CD4-positive, alpha-beta T cell (primary cell): ENCODE measurements at regions of chr1 and their contacts with region 1.

Region 1: GRCh38 chr1:26733982-26734381 is 38.2 kb downstream of the ARID1A start:
- DNase-seq: peak in 4 of 14 experiments; percentile 25 to 59 (median 50)
- ATAC-seq: peak; percentile 52
- H3K4me3 ChIP-seq: no peak overlapping the region
- H3K4me3 Mint-ChIP-seq: no peak overlapping the region
- H3K27ac ChIP-seq: no peak overlapping the region
- H3K27ac Mint-ChIP-seq: peak overlapping the region; percentile 84
- H3K4me1 ChIP-seq: peaks cover 50% of the 10 kb centered on the region
- H3K4me1 Mint-ChIP-seq: peaks cover 68% of the 10 kb centered on the region
- H3K27me3 ChIP-seq: no peaks in the 10 kb centered on the region
- H3K27me3 Mint-ChIP-seq: no peaks in the 10 kb centered on the region
- CTCF ChIP-seq: no peak

Region 2: DNA sequence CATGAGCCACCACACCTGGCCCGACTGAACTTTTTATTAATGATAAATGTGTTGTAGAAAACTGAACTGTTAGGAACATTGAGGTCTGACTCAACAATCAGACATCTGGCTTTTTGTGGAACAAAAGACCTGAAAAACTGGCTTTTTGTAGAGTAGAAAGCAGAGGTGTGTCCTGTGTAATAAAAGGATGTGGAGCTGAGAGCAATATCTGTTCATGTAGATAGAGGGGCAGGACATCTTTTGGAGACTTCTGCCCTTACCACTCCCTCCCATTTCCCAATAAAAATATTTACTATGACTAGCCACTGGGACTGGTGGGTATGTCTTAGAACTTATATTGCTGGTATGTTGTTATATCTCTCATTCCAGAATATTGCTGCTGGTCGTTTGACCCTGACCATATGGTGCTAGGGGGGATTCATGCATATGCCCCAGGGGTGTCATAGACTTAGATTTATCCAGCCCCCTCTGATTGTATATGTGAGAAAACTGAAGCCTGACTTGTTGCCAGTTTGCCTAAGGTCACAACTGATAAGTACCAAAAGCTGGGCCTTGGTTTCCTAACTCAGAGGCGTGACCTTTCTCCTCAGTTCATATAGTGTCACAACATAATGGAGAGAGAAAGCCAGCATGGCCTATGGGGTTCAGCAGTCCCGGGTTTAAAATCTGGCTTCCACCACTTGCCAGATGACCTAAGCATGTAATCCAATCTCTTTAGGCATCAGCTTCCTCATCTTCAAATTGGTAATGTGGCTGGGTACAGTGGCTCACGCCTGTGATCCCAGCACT is 20.3 kb after region 1 on chr1:
- CTCF ChIA-PET with region 1: no interaction called
- POLR2A ChIA-PET with region 1: no interaction called
- intact Hi-C with region 1: loop called in 1 of 2 experiments (anchors 1 kb)
- DNase-seq: no peak
- ATAC-seq: no peak
- H3K4me3 ChIP-seq: no peak overlapping the region
- H3K4me3 Mint-ChIP-seq: no peak overlapping the region
- H3K27ac ChIP-seq: no peak overlapping the region
- H3K27ac Mint-ChIP-seq: peak overlapping the region; percentile 74
- H3K4me1 ChIP-seq: peaks cover 32% of the 10 kb centered on the region
- H3K4me1 Mint-ChIP-seq: peaks cover 65% of the 10 kb centered on the region
- H3K27me3 ChIP-seq: no peaks in the 10 kb centered on the region
- H3K27me3 Mint-ChIP-seq: no peaks in the 10 kb centered on the region
- CTCF ChIP-seq: no peak